ENCODE measurements at regions of chr14 and their contacts with region 1.

Region 1: DNA sequence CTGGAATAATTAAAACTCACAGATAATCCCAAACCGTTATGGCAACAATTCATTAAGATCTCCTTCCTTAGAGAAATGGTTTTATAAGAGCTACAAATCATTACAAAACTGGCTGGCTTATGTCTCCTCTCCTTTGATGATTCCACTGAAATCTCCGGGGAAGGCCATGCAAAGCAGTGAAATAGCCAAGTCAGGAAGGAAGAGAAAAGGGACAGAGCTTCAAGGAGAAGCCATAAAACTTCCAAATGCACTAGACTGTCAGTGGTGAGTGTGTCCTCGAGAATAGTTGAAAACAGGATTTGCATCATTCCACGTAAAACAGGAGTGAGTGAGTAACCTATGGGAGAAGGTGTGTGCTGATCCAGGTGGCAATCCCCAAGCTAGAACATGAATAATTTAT is 330.0 kb downstream of the DIO2 start:
- DNase-seq: no peak
- H3K4me3 Mint-ChIP-seq: no peak overlapping the region
- H3K27ac Mint-ChIP-seq: no peak overlapping the region
- H3K4me1 Mint-ChIP-seq: no peaks in the 10 kb centered on the region
- H3K27me3 Mint-ChIP-seq: no peaks in the 10 kb centered on the region
- CTCF ChIP-seq: no peak

Region 2: DNA sequence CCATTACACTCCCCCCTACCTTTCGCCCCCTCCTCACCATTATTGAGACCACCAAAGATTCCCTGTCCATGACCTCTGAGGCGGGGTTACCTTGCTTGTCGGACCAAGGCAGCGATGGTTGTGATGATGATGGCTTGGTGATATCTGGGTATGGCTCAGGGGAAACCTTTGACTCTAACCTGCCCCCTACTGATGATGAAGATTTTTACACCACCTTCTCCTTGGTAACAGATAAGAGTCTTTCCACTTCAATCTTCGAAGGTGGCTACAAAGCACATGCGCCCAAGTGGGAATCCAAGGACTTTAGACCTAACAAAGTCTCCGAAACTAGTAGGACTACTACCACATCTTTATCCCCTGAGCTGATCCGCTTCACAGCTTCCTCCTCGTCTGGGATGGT is 20.2 kb before region 1 on chr14:
- CTCF ChIA-PET with region 1: no interaction called
- intact Hi-C with region 1: loop called (anchors 2 kb)
- DNase-seq: no peak
- H3K4me3 Mint-ChIP-seq: no peak overlapping the region
- H3K27ac Mint-ChIP-seq: no peak overlapping the region
- H3K4me1 Mint-ChIP-seq: no peaks in the 10 kb centered on the region
- H3K27me3 Mint-ChIP-seq: no peaks in the 10 kb centered on the region
- CTCF ChIP-seq: no peak

Measured in Calu3 (cell line).